ENCODE measurements at regions of chr3 and their contacts with region 1.

Region 1: DNA sequence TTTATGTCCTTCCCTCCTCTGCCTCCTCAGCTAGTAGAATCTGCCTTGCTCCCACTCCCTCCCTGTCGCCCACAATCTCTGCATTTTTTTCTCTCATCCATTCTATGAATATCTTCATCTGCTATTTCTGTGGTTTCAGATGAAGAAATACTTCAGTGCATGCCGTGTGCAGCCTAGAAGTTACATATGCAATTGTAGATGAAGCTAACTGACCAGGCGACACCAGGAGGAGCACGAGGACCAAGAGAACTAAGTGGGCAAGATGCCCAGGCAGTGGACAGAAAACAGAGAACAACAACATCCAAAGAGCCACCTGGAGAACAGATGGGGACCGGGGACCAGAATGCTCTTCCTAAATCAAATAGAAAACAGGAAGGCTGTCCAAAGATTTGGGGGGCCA is 121.4 kb upstream of the ATP11B start:
- DNase-seq: no peak
- ATAC-seq: no peak
- H3K4me3 ChIP-seq: no peak overlapping the region
- H3K27ac ChIP-seq: no peak overlapping the region
- H3K4me1 ChIP-seq: no peaks in the 10 kb centered on the region
- H3K27me3 ChIP-seq: peaks cover 3% of the 10 kb centered on the region; the same call in 1 of the 2 replicates
- CTCF ChIP-seq: no peak

Region 2: GRCh38 chr3:182325213-182325941 is 346.6 kb before region 1 on chr3:
- CTCF ChIA-PET with region 1: no interaction called
- POLR2A ChIA-PET with region 1: interaction called, 16 read pairs
- in situ Hi-C with region 1: no loop called
- intact Hi-C with region 1: no loop called
- DNase-seq: no peak
- ATAC-seq: no peak
- H3K4me3 ChIP-seq: no peak overlapping the region
- H3K27ac ChIP-seq: no peak overlapping the region
- H3K4me1 ChIP-seq: no peaks in the 10 kb centered on the region
- H3K27me3 ChIP-seq: no peaks in the 10 kb centered on the region
- CTCF ChIP-seq: no peak

Region 3: DNA sequence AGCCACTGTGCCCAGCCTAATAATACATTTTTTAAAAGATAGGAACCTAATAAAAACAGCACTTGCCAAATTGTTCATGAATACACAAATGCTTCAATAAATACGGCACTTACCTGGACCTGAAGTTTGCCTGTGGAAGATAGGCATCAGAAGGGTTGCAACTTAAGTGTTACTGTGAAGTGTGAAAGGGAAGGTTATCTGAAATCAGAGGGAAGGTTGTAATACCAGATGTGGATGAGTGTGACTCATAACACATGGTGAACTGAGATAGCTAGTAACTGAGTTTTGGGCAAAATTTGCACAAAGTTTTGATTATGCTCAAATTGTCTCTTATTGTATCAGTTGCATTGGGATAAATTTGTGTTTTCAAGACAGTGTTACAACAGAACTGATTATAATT is 189.4 kb after region 1 on chr3:
- CTCF ChIA-PET with region 1: no interaction called
- POLR2A ChIA-PET with region 1: no interaction called
- in situ Hi-C with region 1: no loop called
- intact Hi-C with region 1: no loop called
- DNase-seq: no peak
- ATAC-seq: no peak
- H3K4me3 ChIP-seq: no peak overlapping the region
- H3K27ac ChIP-seq: no peak overlapping the region
- H3K4me1 ChIP-seq: no peaks in the 10 kb centered on the region
- H3K27me3 ChIP-seq: no peaks in the 10 kb centered on the region
- CTCF ChIP-seq: no peak